ENCODE measurements at regions of chr3 and their contacts with region 1.

Region 1: GRCh38 chr3:8970971-8971589 is 7.8 kb upstream of the RAD18 start:
- DNase-seq: peak; percentile 63 to 67
- H3K4me3 ChIP-seq: no peak overlapping the region
- H3K27ac ChIP-seq: no peak overlapping the region
- H3K4me1 ChIP-seq: no peaks in the 10 kb centered on the region
- H3K27me3 ChIP-seq: no peaks in the 10 kb centered on the region
- CTCF ChIP-seq: peak; percentile 95 to 99 (median 96)
- POLR2A ChIP-seq: no peak

Region 2: GRCh38 chr3:9302425-9303181 is 331.5 kb after region 1 on chr3:
- intact Hi-C with region 1: loop called (anchors 2 kb)
- DNase-seq: peak; percentile 82 to 85
- H3K4me3 ChIP-seq: peak overlapping the region in 1 of 2 donors; percentile 18
- H3K27ac ChIP-seq: no peak overlapping the region
- H3K4me1 ChIP-seq: no peaks in the 10 kb centered on the region
- H3K27me3 ChIP-seq: no peaks in the 10 kb centered on the region
- CTCF ChIP-seq: peak; percentile 87 to 95 (median 90)
- POLR2A ChIP-seq: no peak

Measured in uterus (tissue), 4 donors.